B cell (primary cell): ENCODE measurements at regions of chr2 and their contacts with region 1.

Region 1: DNA sequence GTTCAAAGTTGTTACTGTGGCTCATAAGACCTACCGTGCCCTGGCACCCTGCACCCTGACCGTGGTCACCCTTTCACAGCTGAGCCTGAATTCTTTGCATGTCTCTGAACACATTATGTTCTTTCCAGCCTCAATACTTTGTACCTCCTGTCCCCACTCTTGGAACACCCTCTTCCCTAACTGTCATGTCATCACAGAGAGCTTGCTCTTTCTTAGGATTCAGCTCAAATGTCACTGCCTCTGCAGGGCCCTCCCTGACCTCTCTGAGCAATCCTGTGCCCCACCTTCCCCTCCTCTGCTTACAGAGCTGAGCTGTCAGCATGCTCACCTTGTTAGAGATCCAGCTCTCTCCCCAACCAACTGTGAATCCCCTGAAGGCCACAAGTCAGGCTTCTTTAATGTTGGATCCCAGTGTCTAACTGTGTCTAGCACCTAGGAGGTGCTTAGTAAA is 15.0 kb downstream of the PRKAG3 start:
- DNase-seq: no peak
- ATAC-seq: no peak
- H3K4me3 ChIP-seq: no peak overlapping the region
- H3K4me3 Mint-ChIP-seq: no peak overlapping the region
- H3K27ac ChIP-seq: no peak overlapping the region
- H3K27ac Mint-ChIP-seq: no peak overlapping the region
- H3K4me1 ChIP-seq: no peaks in the 10 kb centered on the region
- H3K4me1 Mint-ChIP-seq: no peaks in the 10 kb centered on the region
- H3K27me3 ChIP-seq: peaks cover 0 to 14% (median 0%) of the 10 kb centered on the region in 4 experiments
- H3K27me3 Mint-ChIP-seq: peaks cover 50% of the 10 kb centered on the region
- CTCF ChIP-seq: no peak

Region 2: DNA sequence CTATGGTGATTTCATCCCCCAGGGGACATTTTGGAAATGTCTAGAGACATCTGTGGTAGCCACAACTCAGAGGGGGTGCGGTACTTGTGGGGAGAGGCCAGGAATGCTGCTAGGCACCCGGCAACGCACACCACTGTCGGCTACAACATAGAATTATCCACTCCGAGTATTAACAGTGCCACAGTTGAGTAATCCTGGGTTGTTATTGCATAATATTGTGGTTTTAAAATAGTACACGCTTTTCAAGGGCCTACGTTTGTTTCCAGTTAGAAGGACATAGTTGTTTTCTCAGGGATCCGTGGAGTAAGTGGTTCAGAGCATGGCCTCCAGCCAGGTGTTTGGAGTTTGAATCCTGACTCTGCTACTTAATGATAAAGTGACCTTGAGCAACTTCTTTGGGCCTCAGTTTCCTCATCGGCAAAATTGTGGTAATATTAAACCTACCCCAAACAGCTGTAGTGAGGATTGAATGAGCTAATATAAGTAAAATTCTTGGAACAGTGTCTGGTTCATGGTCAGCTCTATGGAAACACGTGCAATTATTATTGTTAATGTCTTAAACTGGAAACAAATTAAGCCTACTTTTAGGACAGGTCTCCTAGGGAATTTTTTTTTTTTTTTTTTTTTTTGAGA is 10.1 kb before region 1 on chr2:
- CTCF ChIA-PET with region 1: no interaction called
- POLR2A ChIA-PET with region 1: interaction called, 11 read pairs
- intact Hi-C with region 1: no loop called
- DNase-seq: no peak
- ATAC-seq: no peak
- H3K4me3 ChIP-seq: no peak overlapping the region
- H3K4me3 Mint-ChIP-seq: no peak overlapping the region
- H3K27ac ChIP-seq: no peak overlapping the region
- H3K27ac Mint-ChIP-seq: no peak overlapping the region
- H3K4me1 ChIP-seq: no peaks in the 10 kb centered on the region
- H3K4me1 Mint-ChIP-seq: no peaks in the 10 kb centered on the region
- H3K27me3 ChIP-seq: peaks cover 0 to 28% (median 12%) of the 10 kb centered on the region in 4 experiments
- H3K27me3 Mint-ChIP-seq: peaks cover 49% of the 10 kb centered on the region
- CTCF ChIP-seq: no peak